Activated naive CD8-positive, alpha-beta T cell treated with anti-CD3 and anti-CD28 coated beads, Interleukin-2, amount 10 ng/mL, durations not matched to agents 7 days and 5 days (primary cell): ENCODE measurements at regions of chr6 and their contacts with region 1.

Region 1: DNA sequence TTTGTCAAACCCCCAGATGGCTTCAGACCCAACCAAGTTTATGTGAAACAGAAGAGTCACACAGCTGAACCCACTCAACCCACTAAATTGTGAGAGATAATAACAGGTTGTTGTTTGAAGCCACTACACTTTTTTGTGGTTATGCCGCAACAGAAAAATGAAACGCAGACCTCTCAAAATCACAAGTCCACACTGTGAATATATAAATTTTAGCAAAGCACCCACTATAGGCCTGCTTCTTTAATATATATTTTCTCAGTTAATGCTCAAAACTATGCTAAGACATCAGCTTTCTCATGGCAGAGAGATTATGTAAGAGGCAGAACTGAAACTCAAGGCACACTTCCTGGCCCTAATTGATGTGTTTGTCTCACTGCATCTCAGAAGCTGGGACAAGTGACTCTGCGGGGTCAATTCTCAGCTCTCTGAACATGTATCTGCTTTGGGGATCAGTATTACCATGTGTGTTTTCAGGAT is 27.7 kb downstream of the MAP3K5 start:
- DNase-seq: no peak
- ATAC-seq: peak; percentile 70
- H3K4me3 Mint-ChIP-seq: peak overlapping the region; percentile 46
- H3K27ac Mint-ChIP-seq: peak overlapping the region; percentile 85
- H3K4me1 Mint-ChIP-seq: peaks cover 64% of the 10 kb centered on the region
- H3K27me3 Mint-ChIP-seq: no peaks in the 10 kb centered on the region

Region 2: DNA sequence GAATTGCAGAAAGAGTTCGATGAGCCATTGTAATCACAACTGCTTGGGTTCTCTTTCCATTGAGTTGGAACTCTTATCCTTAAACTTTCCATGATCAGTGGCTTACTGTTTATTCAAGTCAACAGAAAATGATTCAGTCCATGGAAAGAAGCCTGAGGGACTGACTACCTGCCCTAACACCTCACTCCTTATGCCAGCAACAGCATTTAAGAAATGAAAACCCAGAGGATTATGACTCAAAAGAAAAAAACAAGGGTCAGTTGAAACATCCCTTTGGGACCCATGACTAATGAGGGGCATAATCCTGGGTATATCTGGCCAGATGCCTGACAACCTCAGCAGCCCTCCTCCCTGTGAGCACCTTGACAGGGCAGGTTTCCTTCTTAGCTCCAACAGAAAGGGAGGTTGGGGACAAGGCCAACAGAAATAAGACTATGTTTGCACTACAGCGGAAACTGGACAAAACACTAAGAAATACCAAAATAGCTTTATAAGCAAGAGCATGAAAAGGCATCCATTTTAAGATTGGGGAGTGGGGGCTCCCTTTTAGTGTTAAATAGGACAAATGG is 78.9 kb before region 1 on chr6:
- POLR2A ChIA-PET with region 1: no interaction called
- DNase-seq: no peak
- ATAC-seq: no peak
- H3K4me3 Mint-ChIP-seq: no peak overlapping the region
- H3K27ac Mint-ChIP-seq: no peak overlapping the region
- H3K4me1 Mint-ChIP-seq: peaks cover 3% of the 10 kb centered on the region
- H3K27me3 Mint-ChIP-seq: no peaks in the 10 kb centered on the region

Region 3: DNA sequence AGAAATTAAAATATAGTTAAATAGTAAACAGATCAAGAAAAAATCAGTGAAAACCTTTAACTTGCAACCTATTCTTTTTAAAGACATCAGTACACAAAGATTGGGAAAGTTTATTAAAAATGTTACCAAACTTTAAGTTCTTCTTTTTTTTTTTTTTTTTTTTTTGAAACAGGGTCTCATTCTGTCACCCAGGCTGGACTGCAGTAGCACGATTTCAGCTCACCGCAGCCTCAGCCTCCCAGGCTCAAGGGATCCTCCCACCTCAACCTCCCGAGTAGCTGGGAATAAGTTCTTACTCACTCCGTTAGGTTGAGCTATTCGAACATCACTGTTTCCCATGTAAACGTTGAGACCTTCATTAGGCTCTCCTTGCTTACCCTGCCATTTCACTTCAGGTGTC is 22.1 kb after region 1 on chr6:
- POLR2A ChIA-PET with region 1: interaction called, 32 read pairs
- DNase-seq: no peak
- ATAC-seq: no peak
- H3K4me3 Mint-ChIP-seq: no peak overlapping the region
- H3K27ac Mint-ChIP-seq: no peak overlapping the region
- H3K4me1 Mint-ChIP-seq: peaks cover 73% of the 10 kb centered on the region
- H3K27me3 Mint-ChIP-seq: no peaks in the 10 kb centered on the region

Region 4: DNA sequence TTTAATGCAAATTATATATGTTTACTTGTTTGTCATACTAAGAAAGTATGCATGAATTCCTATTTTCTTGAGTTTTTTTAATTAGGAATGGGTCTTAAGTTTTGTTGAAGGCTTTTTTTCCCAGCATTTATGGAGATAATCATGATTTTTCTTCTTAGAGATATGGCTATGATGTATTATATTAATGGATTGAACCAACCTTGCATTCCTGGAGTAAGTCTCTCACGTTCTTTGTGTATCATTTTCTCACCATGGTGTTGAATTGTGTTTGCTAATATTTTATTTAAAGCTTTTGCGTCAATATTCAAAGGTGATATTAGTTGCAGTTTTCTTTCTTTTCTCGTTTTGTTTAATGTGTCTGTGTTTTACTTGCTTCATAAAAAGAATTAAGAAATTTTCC is 109.2 kb after region 1 on chr6:
- POLR2A ChIA-PET with region 1: no interaction called
- DNase-seq: no peak
- ATAC-seq: no peak
- H3K4me3 Mint-ChIP-seq: no peak overlapping the region
- H3K27ac Mint-ChIP-seq: no peak overlapping the region
- H3K4me1 Mint-ChIP-seq: no peaks in the 10 kb centered on the region
- H3K27me3 Mint-ChIP-seq: no peaks in the 10 kb centered on the region